H1 (cell line): ENCODE measurements at regions of chr7 and their contacts with region 1.

Region 1: DNA sequence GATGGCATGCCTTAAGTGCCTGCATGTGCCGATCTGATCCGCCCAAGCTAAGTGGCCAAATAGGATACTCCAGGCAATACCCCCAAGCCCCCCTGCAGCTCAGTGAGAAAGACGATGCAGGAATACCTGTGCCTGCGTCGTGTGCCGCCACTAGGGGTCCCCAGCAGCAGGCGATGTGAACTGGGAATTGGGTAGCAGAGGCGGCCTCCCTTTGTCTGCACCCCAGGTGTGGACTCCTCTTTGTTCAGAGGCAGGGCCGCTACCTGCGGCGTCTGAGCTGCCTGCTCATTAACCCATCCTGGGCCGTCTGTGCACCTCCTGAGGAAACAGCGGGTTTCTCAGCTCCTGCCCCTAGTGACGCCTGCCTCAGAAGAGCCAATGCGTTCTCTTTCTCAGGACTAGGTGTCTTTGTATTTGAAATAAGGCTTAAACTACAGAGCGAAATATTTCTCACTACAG is 4.8 kb upstream of the CHN2 start:
- DNase-seq: peak; percentile 93 to 94
- H3K4me3 ChIP-seq: peak overlapping the region in 1 of 4 experiments; percentile 31; a peak in 2 of 8 replicates
- H3K27ac ChIP-seq: no peak overlapping the region
- H3K4me1 ChIP-seq: peaks cover 0 to 11% (median 7%) of the 10 kb centered on the region in 4 experiments; a peak in 4 of 7 replicates
- H3K27me3 ChIP-seq: peaks cover 14 to 36% (median 30%) of the 10 kb centered on the region in 4 experiments
- CTCF ChIP-seq: peak; percentile 91 to 97 (median 94)
- EP300 ChIP-seq: peak; percentile 35 to 85; a peak in 2 of 3 replicates
- POLR2A ChIP-seq: no peak
- RAD21 ChIP-seq: peak; percentile 82 to 91

Region 2: DNA sequence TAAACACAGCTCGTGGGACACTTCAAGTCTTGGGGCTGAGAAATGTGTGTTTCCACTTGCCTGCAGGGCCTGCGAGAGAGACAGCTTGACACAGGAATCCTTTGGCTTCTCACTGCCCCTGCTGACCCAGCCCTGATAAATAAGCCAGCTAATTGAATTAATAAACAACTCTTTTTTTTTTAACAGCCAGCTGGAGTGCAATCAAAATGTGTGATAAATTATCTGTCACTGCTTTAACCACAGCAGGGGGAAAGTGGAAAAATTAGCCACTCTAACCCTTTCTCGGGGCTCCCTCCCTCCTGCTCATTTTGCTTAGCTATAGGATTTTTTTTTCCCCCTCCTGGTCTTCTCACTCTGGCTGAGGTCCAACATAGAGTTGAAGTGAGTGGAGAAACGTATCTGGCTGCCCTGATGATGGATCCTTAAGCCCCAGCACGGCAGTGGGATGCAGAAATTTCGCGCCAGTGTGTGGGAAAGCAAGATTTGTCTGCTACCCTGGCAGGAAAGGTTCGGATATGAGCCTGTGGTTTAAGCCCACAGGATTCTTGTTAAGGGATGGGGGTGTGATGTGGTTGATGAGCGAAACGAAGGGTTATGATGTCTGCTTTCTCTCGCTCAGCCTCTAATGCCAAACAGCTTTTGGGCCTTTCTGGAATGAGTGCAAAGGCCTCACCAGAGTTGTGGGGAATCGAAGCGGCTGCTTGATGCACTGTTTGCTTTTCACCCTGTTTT is 405.4 kb before region 1 on chr7:
- CTCF ChIA-PET with region 1: no interaction called
- POLR2A ChIA-PET with region 1: no interaction called
- DNase-seq: no peak
- H3K4me3 ChIP-seq: no peak overlapping the region
- H3K27ac ChIP-seq: no peak overlapping the region
- H3K4me1 ChIP-seq: no peaks in the 10 kb centered on the region
- H3K27me3 ChIP-seq: no peaks in the 10 kb centered on the region
- CTCF ChIP-seq: no peak
- EP300 ChIP-seq: no peak
- POLR2A ChIP-seq: no peak
- RAD21 ChIP-seq: no peak

Region 3: DNA sequence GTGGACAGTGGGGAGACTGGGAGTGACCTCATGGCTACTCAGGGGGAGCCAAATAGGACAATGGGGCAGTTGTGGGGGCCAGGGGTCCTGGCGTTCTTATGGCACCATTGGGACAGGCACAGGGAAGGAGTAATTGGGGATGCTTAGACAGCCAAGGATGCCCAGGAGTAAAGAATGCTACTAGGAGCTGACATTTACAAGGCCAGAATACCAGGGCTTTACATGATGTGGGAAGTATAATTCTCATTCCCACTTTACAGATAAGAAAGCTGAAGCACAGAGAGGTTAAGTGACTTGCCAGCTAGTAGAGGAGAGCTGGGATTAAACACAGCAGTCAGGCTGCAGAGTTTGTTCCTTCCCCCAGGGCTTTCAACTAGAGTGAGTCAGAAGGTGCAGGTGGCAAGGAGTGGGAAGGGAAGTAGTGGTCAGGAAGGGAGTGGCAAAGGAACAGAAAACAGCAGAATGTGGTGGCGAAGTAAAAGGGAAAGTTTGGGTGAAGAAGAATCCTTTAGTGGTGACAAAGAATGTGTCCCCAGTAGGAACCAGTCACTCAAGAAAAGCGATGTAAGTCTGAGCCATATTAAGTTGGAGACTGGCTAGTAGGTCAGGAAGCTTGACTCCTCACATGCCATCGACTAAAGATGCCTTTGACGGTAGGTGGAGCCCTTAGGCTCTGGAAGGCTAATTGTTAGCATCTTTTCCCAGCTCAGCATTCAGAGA is 76.2 kb before region 1 on chr7:
- CTCF ChIA-PET with region 1: interaction called, 16 read pairs
- POLR2A ChIA-PET with region 1: no interaction called
- DNase-seq: peak in 1 of 2 experiments; percentile 27
- H3K4me3 ChIP-seq: no peak overlapping the region
- H3K27ac ChIP-seq: no peak overlapping the region
- H3K4me1 ChIP-seq: peaks cover 2 to 3% (median 3%) of the 10 kb centered on the region in 4 experiments; a peak in 4 of 7 replicates
- H3K27me3 ChIP-seq: no peaks in the 10 kb centered on the region
- CTCF ChIP-seq: peak; percentile 21 to 76 (median 67)
- EP300 ChIP-seq: no peak
- POLR2A ChIP-seq: no peak
- RAD21 ChIP-seq: peak; percentile 80 to 83

Region 4: GRCh38 chr7:29127527-29127926 is 62.2 kb before region 1 on chr7:
- CTCF ChIA-PET with region 1: interaction called, 13 read pairs
- POLR2A ChIA-PET with region 1: no interaction called
- DNase-seq: no peak
- H3K4me3 ChIP-seq: no peak overlapping the region
- H3K27ac ChIP-seq: no peak overlapping the region
- H3K4me1 ChIP-seq: peaks cover 0 to 3% (median 1%) of the 10 kb centered on the region in 4 experiments; a peak in 2 of 7 replicates
- H3K27me3 ChIP-seq: no peaks in the 10 kb centered on the region
- CTCF ChIP-seq: no peak
- EP300 ChIP-seq: no peak
- POLR2A ChIP-seq: no peak
- RAD21 ChIP-seq: no peak

Region 5: DNA sequence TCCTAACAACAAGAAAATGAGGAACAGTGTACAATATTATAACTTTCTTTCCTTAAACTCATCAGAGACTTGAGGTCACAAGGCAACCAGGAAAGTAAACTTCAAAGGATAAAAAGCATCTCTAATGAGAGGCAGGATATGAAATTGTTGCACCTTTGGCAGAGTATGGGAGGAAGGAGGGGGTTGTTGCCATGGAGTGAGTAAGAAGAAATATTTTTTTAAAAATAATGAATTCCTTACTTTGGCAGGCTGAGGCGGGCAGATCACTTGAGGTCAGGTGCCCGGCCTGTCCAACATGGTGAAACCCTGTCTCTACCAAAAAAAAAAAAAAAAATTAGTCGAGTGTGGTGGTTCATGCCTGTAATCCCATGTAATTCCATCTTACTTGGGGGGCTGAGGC is 16.3 kb before region 1 on chr7:
- CTCF ChIA-PET with region 1: interaction called, 17 read pairs
- POLR2A ChIA-PET with region 1: no interaction called
- DNase-seq: no peak
- H3K4me3 ChIP-seq: no peak overlapping the region
- H3K27ac ChIP-seq: no peak overlapping the region
- H3K4me1 ChIP-seq: no peaks in the 10 kb centered on the region
- H3K27me3 ChIP-seq: no peaks in the 10 kb centered on the region
- CTCF ChIP-seq: no peak
- EP300 ChIP-seq: no peak
- POLR2A ChIP-seq: no peak
- RAD21 ChIP-seq: no peak

Region 6: DNA sequence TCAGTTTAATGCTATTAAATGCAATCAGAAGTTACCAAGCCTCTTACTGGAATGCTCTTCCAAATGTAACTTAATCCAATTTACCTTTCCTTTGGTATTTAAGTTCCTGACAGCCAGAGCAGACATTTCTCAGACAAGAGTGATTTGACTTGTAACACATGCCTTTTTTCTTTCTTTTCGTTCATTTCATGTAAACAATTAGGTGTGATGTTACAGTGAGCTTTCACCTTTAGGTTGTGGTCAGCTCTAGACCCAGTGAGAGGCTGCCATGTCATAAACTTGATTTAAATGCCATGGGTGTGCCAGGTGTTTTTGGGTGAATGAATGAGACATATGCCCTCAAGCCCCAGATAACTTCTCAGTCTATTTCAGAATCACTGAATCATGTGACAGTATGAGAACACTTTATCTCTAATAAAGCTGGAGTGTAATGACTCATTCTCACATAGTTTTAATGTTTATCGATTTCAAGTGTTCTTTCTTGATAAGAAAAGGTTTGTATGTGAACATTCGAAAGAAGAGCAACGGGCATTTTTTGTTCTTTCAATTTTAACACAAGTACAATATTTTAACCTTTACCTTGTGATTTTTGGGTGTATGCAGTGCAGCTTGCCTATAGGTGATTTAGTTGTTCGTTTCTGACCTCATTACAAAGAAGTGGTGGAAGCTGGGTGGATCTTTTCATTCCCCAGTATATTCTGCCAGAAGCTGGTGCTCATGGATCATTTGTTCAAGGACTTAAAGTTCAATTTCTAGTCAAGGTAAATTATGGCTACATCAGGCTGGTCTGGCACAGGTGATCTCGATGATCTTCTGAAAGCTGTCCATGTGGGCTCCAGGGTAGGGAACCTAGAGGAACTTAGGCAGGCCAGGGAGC is 66.4 kb after region 1 on chr7:
- CTCF ChIA-PET with region 1: interaction called, 11 read pairs
- POLR2A ChIA-PET with region 1: interaction called, 3 read pairs
- DNase-seq: no peak
- H3K4me3 ChIP-seq: no peak overlapping the region
- H3K27ac ChIP-seq: no peak overlapping the region
- H3K4me1 ChIP-seq: 0 out of 7 replicates have a peak, but pooled peaks cover 0 to 2% (median 0%) of the 10 kb centered on the region in 4 experiments
- H3K27me3 ChIP-seq: no peaks in the 10 kb centered on the region
- CTCF ChIP-seq: no peak
- EP300 ChIP-seq: no peak
- POLR2A ChIP-seq: no peak
- RAD21 ChIP-seq: no peak

Region 7: GRCh38 chr7:29408841-29409243 is 219.1 kb after region 1 on chr7:
- CTCF ChIA-PET with region 1: interaction called, 36 read pairs
- POLR2A ChIA-PET with region 1: no interaction called
- DNase-seq: peak; percentile 15 to 72
- H3K4me3 ChIP-seq: no peak overlapping the region
- H3K27ac ChIP-seq: no peak overlapping the region
- H3K4me1 ChIP-seq: peaks cover 2 to 11% (median 6%) of the 10 kb centered on the region in 4 experiments; a peak in 4 of 7 replicates
- H3K27me3 ChIP-seq: no peaks in the 10 kb centered on the region
- CTCF ChIP-seq: peak in 2 of 3 experiments; percentile 75 to 87; a peak in 3 of 4 replicates
- EP300 ChIP-seq: no peak
- POLR2A ChIP-seq: no peak
- RAD21 ChIP-seq: peak; percentile 96 to 98

Region 8: GRCh38 chr7:29463504-29464158 is 273.9 kb after region 1 on chr7:
- CTCF ChIA-PET with region 1: no interaction called
- POLR2A ChIA-PET with region 1: no interaction called
- DNase-seq: no peak
- H3K4me3 ChIP-seq: no peak overlapping the region
- H3K27ac ChIP-seq: no peak overlapping the region
- H3K4me1 ChIP-seq: no peaks in the 10 kb centered on the region
- H3K27me3 ChIP-seq: no peaks in the 10 kb centered on the region
- CTCF ChIP-seq: no peak
- EP300 ChIP-seq: no peak
- POLR2A ChIP-seq: no peak
- RAD21 ChIP-seq: no peak